T-cell (primary cell): ENCODE measurements at regions of chr7 and their contacts with region 1.

Region 1: GRCh38 chr7:112336936-112337576 is 113.2 kb upstream of the IFRD1 start:
- DNase-seq: no peak
- ATAC-seq: no peak
- H3K4me3 ChIP-seq: no peak overlapping the region
- H3K4me3 Mint-ChIP-seq: no peak overlapping the region
- H3K27ac ChIP-seq: no peak overlapping the region
- H3K27ac Mint-ChIP-seq: no peak overlapping the region
- H3K4me1 ChIP-seq: no peaks in the 10 kb centered on the region
- H3K4me1 Mint-ChIP-seq: no peaks in the 10 kb centered on the region
- H3K27me3 ChIP-seq: no peaks in the 10 kb centered on the region
- H3K27me3 Mint-ChIP-seq: no peaks in the 10 kb centered on the region

Region 2: DNA sequence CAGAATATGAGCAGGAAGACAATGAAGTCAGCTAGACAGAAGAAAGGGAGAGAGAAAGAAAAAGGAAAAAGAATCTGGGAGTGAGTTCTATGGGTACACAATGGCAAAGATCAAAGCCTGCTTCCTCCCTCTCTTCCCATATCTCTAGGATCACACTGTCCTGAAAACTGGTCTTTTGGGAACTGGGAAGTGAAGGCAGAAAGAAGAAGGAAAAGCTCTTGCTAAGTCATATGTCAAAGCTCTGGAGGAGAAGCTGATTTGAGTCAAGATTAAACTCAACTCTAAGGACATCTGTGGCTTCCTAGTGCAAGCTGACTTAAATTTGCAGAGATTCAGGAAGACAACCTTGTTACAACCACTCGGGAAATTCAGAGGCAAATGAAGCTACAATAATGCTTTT is 278.4 kb before region 1 on chr7:
- CTCF ChIA-PET with region 1: no interaction called
- POLR2A ChIA-PET with region 1: interaction called in 1 of 2 experiments, 14 read pairs
- DNase-seq: no peak
- ATAC-seq: no peak
- H3K4me3 ChIP-seq: no peak overlapping the region
- H3K4me3 Mint-ChIP-seq: no peak overlapping the region
- H3K27ac ChIP-seq: no peak overlapping the region
- H3K27ac Mint-ChIP-seq: no peak overlapping the region
- H3K4me1 ChIP-seq: no peaks in the 10 kb centered on the region
- H3K4me1 Mint-ChIP-seq: no peaks in the 10 kb centered on the region
- H3K27me3 ChIP-seq: no peaks in the 10 kb centered on the region
- H3K27me3 Mint-ChIP-seq: peaks cover 0 to 3% of the 10 kb centered on the region in 2 donors

Region 3: GRCh38 chr7:112172870-112173567 is 164.0 kb before region 1 on chr7:
- CTCF ChIA-PET with region 1: no interaction called
- POLR2A ChIA-PET with region 1: no interaction called
- DNase-seq: no peak
- ATAC-seq: no peak
- H3K4me3 ChIP-seq: no peak overlapping the region
- H3K4me3 Mint-ChIP-seq: no peak overlapping the region
- H3K27ac ChIP-seq: no peak overlapping the region
- H3K27ac Mint-ChIP-seq: no peak overlapping the region
- H3K4me1 ChIP-seq: no peaks in the 10 kb centered on the region
- H3K4me1 Mint-ChIP-seq: no peaks in the 10 kb centered on the region
- H3K27me3 ChIP-seq: peaks cover 0 to 6% of the 10 kb centered on the region in 2 experiments
- H3K27me3 Mint-ChIP-seq: peaks cover 24 to 43% of the 10 kb centered on the region in 2 donors

Region 4: GRCh38 chr7:112362731-112363131 is 25.7 kb after region 1 on chr7:
- CTCF ChIA-PET with region 1: no interaction called
- POLR2A ChIA-PET with region 1: no interaction called
- DNase-seq: no peak
- ATAC-seq: no peak
- H3K4me3 ChIP-seq: no peak overlapping the region
- H3K4me3 Mint-ChIP-seq: no peak overlapping the region
- H3K27ac ChIP-seq: no peak overlapping the region
- H3K27ac Mint-ChIP-seq: no peak overlapping the region
- H3K4me1 ChIP-seq: no peaks in the 10 kb centered on the region
- H3K4me1 Mint-ChIP-seq: no peaks in the 10 kb centered on the region
- H3K27me3 ChIP-seq: peaks cover 0 to 8% of the 10 kb centered on the region in 2 experiments
- H3K27me3 Mint-ChIP-seq: peaks cover 13 to 15% of the 10 kb centered on the region in 2 donors

Region 5: GRCh38 chr7:112449902-112450806 is 113.1 kb after region 1 on chr7 and contains the start of gene IFRD1:
- CTCF ChIA-PET with region 1: no interaction called
- POLR2A ChIA-PET with region 1: no interaction called
- DNase-seq: peak; percentile 89 to 99 (median 96)
- ATAC-seq: peak; percentile 83 to 89 (median 84)
- H3K4me3 ChIP-seq: peak within 1 kb of the TSS; percentile 96 to 98
- H3K4me3 Mint-ChIP-seq: peak within 1 kb of the TSS; percentile 94 to 99 (median 99)
- H3K27ac ChIP-seq: peak within 1 kb of the TSS; percentile 99
- H3K27ac Mint-ChIP-seq: peak within 1 kb of the TSS; percentile 97 to 98
- H3K4me1 ChIP-seq: peaks cover 7 to 22% of the 10 kb centered on the region in 2 experiments
- H3K4me1 Mint-ChIP-seq: peaks cover 41 to 58% (median 43%) of the 10 kb centered on the region in 3 donors
- H3K27me3 ChIP-seq: no peaks in the 10 kb centered on the region
- H3K27me3 Mint-ChIP-seq: no peaks in the 10 kb centered on the region
- total RNA-seq, gene IFRD1: 45.0 to 268 (median 52.1) TPM